Dendritic cell treated with granulocyte-macrophage colony-stimulating factor and Interleukin-4, amounts not matched to agents 40 ng/mL and 50 ng/mL, for 4 days (primary cell): ENCODE measurements at regions of chr19 and their contacts with region 1.

Region 1: DNA sequence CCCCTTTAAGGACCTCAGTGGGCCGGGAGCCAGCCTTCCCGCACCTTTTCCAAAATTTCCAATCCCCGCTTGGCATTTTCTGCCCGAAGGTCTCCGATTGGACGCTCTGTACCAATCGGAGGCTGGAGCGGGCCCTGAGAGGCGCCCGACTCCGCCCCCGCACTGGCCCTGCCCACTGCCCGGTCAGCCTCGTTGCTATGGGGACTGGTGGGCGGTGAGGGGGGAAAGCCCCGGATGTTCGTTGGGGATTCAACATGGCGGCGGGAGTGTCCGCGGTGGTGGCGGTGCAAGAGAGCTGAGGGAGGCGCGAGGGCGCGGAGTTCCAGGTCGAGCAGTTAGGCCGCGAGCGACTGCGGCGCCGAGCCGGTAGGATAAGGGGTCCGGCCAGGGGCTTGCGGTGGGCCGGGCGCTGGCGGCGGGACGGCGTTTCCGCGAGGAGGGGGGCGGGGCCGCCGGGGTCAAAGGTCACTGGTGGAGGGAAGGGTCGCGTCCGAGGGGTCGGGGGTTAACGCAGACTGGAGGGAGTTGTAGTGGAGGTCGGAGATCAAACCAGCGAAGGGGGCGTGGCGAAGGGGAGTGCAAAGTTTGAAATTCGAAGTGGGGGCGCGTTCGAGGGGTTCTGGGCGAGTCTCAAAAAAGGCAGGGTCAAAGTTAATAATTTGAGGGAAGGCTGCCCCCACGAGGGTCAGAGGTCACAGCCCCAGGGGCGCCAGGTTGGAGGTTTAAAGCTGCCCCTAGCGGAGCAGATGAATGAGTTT is at the start of gene PAK4:
- H3K4me3 Mint-ChIP-seq: peak within 1 kb of the TSS; percentile 97
- H3K27ac Mint-ChIP-seq: peak within 1 kb of the TSS; percentile 93
- H3K4me1 Mint-ChIP-seq: peaks cover 42% of the 10 kb centered on the region
- H3K27me3 Mint-ChIP-seq: peaks cover 11% of the 10 kb centered on the region

Region 2: GRCh38 chr19:39187559-39187957 is 61.8 kb after region 1 on chr19:
- intact Hi-C with region 1: loop called (anchors 1 kb)
- H3K4me3 Mint-ChIP-seq: no peak overlapping the region
- H3K27ac Mint-ChIP-seq: no peak overlapping the region
- H3K4me1 Mint-ChIP-seq: peaks cover 6% of the 10 kb centered on the region
- H3K27me3 Mint-ChIP-seq: peaks cover 7% of the 10 kb centered on the region

Region 3: GRCh38 chr19:39328046-39328705 is 202.4 kb after region 1 on chr19:
- intact Hi-C with region 1: loop called (anchors 1 kb)
- H3K4me3 Mint-ChIP-seq: no peak overlapping the region
- H3K27ac Mint-ChIP-seq: peak overlapping the region; percentile 52
- H3K4me1 Mint-ChIP-seq: peaks cover 59% of the 10 kb centered on the region
- H3K27me3 Mint-ChIP-seq: no peaks in the 10 kb centered on the region